PC-9 (cell line): ENCODE measurements at regions of chr17 and their contacts with region 1.

Region 1: DNA sequence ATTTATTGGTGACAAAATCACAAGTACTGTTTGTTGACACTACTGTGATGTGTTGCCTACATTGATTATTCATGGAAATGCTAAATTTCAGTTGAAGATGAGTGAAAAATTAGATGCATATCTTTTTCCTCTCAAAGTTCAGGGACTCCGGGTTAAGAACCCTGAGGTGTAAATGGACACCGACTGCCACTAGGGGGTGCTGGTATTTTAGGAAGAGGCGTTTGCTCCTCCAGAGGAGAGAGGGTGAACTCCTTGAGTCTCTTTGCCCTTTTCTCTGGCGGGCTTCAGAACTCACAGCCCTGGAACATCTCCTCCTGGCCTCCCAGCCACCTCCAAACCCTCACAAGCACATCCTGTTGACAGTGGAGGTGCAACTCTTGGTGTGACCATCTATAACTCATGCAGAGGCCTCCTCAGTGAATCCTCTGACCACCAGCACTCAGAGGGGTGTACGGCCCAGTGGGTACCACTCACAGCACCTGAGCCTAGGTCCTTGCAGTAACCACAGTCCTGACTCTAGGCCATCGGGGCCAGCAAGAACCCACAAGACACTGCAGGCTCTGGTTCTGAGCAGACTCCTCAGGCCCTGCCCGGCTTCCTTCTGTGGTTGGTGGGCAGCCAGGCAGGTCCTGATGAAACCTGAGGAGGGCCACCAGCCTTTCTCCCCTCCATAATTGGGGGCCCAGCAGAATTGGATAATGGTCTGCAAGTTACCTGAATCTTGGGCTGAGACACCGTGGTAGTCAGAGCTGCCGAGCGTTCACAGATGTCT is 26.2 kb upstream of the PIK3R5 start:
- DNase-seq: peak; percentile 40 to 61
- H3K4me3 ChIP-seq: no peak overlapping the region
- H3K27ac ChIP-seq: no peak overlapping the region
- H3K4me1 ChIP-seq: no peaks in the 10 kb centered on the region
- H3K27me3 ChIP-seq: no peaks in the 10 kb centered on the region
- CTCF ChIP-seq: peak; percentile 74

Region 2: GRCh38 chr17:8916466-8916865 is 75.2 kb before region 1 on chr17:
- CTCF ChIA-PET with region 1: no interaction called
- POLR2A ChIA-PET with region 1: no interaction called
- intact Hi-C with region 1: no loop called
- DNase-seq: no peak
- H3K4me3 ChIP-seq: no peak overlapping the region
- H3K27ac ChIP-seq: no peak overlapping the region
- H3K4me1 ChIP-seq: no peaks in the 10 kb centered on the region
- H3K27me3 ChIP-seq: peaks cover 32% of the 10 kb centered on the region
- CTCF ChIP-seq: no peak

Region 3: DNA sequence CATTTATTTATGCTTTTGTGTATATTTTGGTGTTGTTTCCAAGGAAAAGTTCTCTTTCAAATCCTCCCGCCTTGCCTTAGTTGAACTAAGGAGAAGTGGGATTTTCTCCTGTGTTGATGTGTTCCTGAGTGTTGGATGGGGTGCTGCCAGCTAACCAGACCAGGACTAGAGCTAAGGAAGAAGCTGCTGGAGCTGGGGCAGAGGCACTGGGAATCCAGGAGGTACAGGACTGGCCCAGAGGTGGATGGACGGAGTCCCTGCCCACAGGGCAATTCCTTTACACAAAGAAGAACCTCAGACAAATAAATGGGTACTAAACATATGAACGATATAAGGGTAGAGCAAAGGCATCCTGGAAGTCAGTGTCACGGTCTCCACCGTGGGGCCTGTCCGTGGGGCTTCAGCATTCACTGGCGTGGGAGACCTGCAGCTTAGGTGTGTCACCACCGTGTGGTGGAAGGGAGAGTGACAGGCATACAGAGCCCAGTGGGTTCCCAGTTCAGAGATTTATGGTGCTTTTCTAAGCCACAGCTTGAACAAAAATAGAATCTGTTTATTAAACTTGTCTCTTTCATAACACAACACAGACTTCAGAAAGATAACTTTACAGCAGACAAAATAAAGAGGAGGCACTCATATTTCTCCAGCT is 300.3 kb after region 1 on chr17:
- CTCF ChIA-PET with region 1: interaction called, 3 read pairs
- POLR2A ChIA-PET with region 1: no interaction called
- intact Hi-C with region 1: loop called (anchors 2 kb)
- DNase-seq: peak in 1 of 2 experiments; percentile 29
- H3K4me3 ChIP-seq: no peak overlapping the region
- H3K27ac ChIP-seq: no peak overlapping the region
- H3K4me1 ChIP-seq: no peaks in the 10 kb centered on the region
- H3K27me3 ChIP-seq: no peaks in the 10 kb centered on the region
- CTCF ChIP-seq: peak; percentile 60

Region 4: DNA sequence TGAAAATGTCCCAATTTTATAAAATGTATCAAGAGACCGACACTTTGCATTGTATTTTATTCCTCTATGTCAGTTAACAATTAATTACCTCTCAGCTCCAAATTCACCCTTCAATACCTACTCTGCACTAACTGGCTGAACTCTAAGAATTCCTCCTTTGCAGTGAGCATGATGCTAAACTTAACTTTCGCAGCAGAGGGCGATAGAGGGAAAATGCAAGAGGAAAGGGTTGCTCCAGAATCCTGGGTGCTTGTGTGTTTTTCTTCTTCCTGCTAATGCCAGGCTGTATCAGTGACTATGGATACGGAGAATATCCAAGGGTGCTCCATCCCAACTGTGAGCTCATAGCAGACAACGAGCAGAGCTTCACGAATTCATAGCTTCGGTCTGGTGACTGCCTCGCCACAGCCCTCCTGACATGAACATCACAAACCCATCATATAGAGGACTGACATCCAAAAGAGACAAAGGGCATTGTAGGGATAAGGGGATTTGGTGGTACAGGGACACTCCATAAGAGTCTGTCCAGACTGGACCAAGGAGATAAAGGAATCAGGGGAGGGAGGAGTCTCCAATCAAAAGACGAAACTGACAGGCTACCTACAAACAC is 411.0 kb after region 1 on chr17:
- CTCF ChIA-PET with region 1: no interaction called
- POLR2A ChIA-PET with region 1: no interaction called
- intact Hi-C with region 1: loop called (anchors 10 kb)
- DNase-seq: peak in 1 of 2 experiments; percentile 21
- H3K4me3 ChIP-seq: no peak overlapping the region
- H3K27ac ChIP-seq: no peak overlapping the region
- H3K4me1 ChIP-seq: no peaks in the 10 kb centered on the region
- H3K27me3 ChIP-seq: no peaks in the 10 kb centered on the region
- CTCF ChIP-seq: peak; percentile 60

Region 5: GRCh38 chr17:9522074-9522473 is 530.4 kb after region 1 on chr17:
- CTCF ChIA-PET with region 1: no interaction called
- POLR2A ChIA-PET with region 1: no interaction called
- intact Hi-C with region 1: loop called (anchors 1 kb)
- DNase-seq: peak in 1 of 2 experiments; percentile 17
- H3K4me3 ChIP-seq: no peak overlapping the region
- H3K27ac ChIP-seq: no peak overlapping the region
- H3K4me1 ChIP-seq: no peaks in the 10 kb centered on the region
- H3K27me3 ChIP-seq: no peaks in the 10 kb centered on the region
- CTCF ChIP-seq: peak; percentile 58